Right ventricle myocardium inferior (tissue), 1 donor: ENCODE measurements at regions of chr7 and their contacts with region 1.

Region 1: DNA sequence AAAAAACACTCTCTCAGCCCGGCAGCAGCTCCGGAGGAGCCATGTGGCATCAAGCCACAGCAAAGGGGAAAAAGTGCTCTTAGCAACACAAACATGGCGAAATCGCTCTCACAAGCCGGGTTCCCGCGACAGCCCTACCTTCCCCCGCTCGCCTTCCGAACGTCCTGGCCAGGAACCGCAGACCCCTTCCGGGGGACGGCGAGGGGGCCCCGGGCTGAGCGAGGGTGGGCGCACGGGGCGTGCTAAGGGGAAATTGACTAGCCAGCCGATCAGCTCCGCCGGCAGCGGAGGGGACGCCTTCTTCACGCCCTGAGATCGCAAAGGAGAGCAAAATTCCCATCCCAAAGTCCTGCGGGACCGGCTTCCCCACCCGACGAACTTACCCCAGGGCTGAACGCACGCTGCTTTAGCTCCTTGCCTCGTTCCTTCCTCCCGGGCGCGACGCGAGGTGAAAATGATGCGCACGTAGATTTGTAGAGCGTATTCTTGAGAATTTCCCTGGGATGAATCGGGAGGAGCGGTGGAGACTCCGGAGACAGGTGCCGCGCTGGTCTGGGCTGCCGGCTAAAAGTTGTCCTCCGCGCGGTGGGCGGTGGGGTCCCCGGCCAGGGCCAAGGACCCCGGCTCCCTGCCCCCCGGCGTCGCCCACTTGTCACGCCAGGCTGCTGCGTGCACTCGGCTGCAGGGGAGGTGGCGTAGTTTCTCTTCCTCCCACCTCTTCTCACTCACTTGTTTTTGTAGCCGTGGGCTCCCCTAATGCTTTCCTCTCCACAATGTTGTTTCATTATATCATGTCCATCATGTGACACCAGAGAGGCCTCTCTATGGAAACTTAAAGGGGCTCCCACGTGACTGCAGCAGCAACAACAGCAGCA is 220.1 kb upstream of the MKLN1 start:
- DNase-seq: peak; percentile 80
- ATAC-seq: peak; percentile 51

Region 2: DNA sequence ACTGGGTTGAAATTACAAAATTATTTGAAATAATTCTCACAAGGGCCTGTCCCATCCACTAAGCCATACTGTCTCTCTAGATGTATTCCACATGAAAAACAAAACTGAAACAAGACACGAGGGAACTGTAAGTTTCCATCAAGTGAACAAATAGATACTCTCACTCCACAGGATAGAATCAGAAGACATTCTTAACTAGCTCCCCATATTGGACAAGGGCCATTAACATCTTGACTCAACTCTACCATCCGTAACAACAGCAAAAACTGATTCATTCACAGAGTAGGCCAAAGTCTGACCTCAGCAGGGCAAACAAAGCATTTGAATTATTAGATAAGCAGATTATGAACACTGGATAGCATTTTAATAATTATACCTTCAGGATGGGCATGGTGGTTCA is 1183.9 kb before region 1 on chr7:
- intact Hi-C with region 1: no loop called
- DNase-seq: no peak
- ATAC-seq: no peak

Region 3: GRCh38 chr7:130896898-130897514 is 210.6 kb before region 1 on chr7:
- intact Hi-C with region 1: loop called (anchors 5 kb)
- DNase-seq: peak; percentile 82
- ATAC-seq: peak; percentile 59

Region 4: DNA sequence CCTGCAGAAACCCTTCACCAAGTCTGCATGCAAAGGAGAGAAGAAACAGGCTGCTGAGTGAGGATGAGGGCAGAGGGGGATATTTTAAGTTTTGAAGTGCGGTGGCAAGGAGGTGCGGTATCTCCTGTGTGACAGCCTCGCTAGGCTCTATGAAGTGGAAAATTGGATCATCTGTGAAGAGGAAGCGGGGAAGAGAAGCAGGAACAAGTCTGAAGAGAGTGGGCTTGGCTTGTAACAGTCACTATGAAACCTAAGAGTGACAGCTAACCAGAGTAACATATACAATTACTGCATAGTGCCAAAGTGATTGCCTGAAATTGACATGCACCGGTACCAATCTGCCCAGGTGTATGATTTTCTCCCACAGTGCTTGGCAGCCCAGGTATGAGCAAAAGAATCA is 86.1 kb before region 1 on chr7:
- intact Hi-C with region 1: no loop called
- DNase-seq: no peak
- ATAC-seq: peak; percentile 12

Region 5: DNA sequence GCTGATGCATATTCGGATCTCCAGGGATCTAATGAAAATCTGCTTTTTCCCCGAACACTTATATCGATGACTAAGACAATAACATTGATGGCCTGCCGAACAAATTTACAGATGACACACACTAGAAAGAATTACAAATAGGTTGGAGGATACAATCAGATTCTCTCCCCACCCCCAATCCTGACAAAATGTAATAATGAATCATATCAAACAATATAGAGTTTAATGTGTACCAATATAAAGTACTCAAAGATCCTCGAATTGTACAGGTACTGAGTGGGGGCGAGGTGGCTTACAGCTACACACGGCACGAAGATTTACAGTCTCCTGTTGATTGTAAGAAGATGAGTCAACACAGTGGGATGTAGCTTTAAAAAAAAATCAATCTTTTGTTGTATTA is 37.5 kb after region 1 on chr7:
- intact Hi-C with region 1: loop called (anchors 5 kb)
- DNase-seq: no peak
- ATAC-seq: no peak

Region 6: GRCh38 chr7:131284702-131285419 is 177.3 kb after region 1 on chr7:
- intact Hi-C with region 1: loop called (anchors 5 kb)
- DNase-seq: peak; percentile 77
- ATAC-seq: peak; percentile 82

Region 7: DNA sequence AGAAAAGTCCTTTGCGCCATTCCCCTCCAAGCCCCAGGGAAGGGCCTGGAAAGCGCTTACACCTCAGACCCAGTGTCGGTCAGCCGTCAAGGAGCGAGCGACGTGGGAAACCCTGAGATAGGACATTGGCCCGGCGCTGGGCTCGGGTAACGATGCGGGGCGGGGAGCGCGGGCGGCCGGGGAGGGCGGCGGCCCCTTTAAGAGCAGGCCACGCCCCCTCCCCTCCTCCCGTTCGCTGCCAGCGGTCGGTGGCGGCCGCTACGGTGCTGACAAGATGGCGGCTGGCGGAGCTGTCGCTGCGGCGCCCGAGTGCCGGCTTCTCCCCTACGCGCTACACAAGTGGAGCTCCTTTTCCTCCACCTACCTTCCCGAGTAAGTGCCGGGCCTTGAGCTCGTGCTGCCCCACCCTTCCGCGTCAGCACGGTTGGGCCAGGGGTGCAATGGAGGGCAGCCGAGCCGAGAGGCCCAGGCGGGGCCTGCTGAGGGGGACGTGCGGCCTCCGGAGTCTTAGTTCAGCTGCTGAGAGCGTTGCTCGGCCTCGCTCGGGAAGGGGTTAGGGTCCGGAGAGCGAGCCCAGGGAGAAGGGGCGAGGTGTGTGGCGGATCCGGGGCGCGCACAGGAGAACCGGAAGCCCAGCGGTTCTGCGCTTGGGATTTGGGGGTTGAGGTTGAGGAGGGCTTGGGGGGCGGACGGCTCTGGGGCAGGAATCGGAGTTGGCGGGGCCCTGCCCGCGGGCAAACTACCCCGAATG is 220.2 kb after region 1 on chr7 and contains the start of gene MKLN1:
- intact Hi-C with region 1: loop called (anchors 2 kb)
- DNase-seq: peak; percentile 99
- ATAC-seq: peak; percentile 98
- total RNA-seq, gene MKLN1: 39.3 TPM

Region 8: GRCh38 chr7:131383417-131384285 is 276.1 kb after region 1 on chr7:
- intact Hi-C with region 1: no loop called
- DNase-seq: no peak
- ATAC-seq: no peak